ENCODE measurements at regions of chr3 and their contacts with region 1.

Region 1: GRCh38 chr3:171011109-171011872 is 15.2 kb downstream of the SLC2A2 start:
- DNase-seq: no peak
- H3K4me3 ChIP-seq: no peak overlapping the region
- H3K27ac ChIP-seq: no peak overlapping the region
- H3K4me1 ChIP-seq: no peaks in the 10 kb centered on the region
- H3K27me3 ChIP-seq: peaks cover 0 to 2% of the 10 kb centered on the region in 2 experiments
- CTCF ChIP-seq: no peak
- POLR2A ChIP-seq: no peak

Region 2: GRCh38 chr3:170670504-170670903 is 340.8 kb before region 1 on chr3:
- CTCF ChIA-PET with region 1: no interaction called
- POLR2A ChIA-PET with region 1: no interaction called
- dilution Hi-C with region 1: no loop called
- intact Hi-C with region 1: no loop called
- DNase-seq: peak; percentile 35
- H3K4me3 ChIP-seq: no peak overlapping the region
- H3K27ac ChIP-seq: no peak overlapping the region
- H3K4me1 ChIP-seq: no peaks in the 10 kb centered on the region
- H3K27me3 ChIP-seq: no peaks in the 10 kb centered on the region
- CTCF ChIP-seq: no peak
- POLR2A ChIP-seq: no peak

Region 3: DNA sequence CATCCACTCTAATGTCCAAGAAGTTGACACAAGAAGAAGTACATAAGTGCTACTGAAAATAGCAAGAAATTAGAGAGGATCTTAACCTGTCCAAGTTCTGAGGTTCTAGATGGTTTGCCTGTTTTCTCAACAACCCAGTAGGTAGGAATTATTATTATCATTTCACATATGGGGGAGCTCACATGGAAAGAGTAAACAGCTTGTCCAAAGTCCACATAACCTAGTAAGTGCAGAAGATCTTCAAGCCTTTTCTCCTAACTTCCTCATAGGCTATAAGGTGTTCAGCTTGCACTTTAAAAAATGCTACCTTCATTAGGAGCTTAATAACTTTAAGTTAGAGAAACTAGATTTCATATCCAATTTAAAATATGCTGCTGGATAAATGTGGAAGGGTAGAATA is 12.3 kb after region 1 on chr3:
- CTCF ChIA-PET with region 1: interaction called, 14 read pairs
- POLR2A ChIA-PET with region 1: no interaction called
- dilution Hi-C with region 1: no loop called
- intact Hi-C with region 1: no loop called
- DNase-seq: no peak
- H3K4me3 ChIP-seq: no peak overlapping the region
- H3K27ac ChIP-seq: no peak overlapping the region
- H3K4me1 ChIP-seq: peaks cover 5% of the 10 kb centered on the region
- H3K27me3 ChIP-seq: peaks cover 5 to 11% of the 10 kb centered on the region in 2 experiments
- CTCF ChIP-seq: no peak
- POLR2A ChIP-seq: no peak

Region 4: DNA sequence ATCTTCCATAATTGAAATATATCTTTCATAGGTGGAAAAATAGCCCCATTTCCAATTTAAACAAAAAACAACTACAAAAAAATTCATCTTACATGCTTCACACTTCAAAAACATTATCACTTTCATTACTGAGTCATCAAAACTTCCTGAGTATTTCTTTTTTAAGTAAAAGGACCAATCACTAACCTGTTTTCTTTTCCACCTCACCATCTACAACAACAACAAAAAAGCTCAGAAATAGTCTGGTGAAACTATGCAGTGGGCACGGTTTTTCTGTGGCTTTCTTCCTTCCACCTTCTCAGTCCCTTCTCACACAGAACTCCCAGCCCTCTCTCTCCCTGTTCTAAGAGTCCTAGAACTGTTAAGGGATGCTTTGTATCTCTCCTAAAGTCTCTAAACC is 469.2 kb after region 1 on chr3:
- CTCF ChIA-PET with region 1: no interaction called
- POLR2A ChIA-PET with region 1: no interaction called
- dilution Hi-C with region 1: no loop called
- intact Hi-C with region 1: no loop called
- DNase-seq: peak; percentile 54
- H3K4me3 ChIP-seq: no peak overlapping the region
- H3K27ac ChIP-seq: no peak overlapping the region
- H3K4me1 ChIP-seq: peaks cover 4% of the 10 kb centered on the region
- H3K27me3 ChIP-seq: no peaks in the 10 kb centered on the region
- CTCF ChIP-seq: no peak
- POLR2A ChIP-seq: no peak

Region 5: DNA sequence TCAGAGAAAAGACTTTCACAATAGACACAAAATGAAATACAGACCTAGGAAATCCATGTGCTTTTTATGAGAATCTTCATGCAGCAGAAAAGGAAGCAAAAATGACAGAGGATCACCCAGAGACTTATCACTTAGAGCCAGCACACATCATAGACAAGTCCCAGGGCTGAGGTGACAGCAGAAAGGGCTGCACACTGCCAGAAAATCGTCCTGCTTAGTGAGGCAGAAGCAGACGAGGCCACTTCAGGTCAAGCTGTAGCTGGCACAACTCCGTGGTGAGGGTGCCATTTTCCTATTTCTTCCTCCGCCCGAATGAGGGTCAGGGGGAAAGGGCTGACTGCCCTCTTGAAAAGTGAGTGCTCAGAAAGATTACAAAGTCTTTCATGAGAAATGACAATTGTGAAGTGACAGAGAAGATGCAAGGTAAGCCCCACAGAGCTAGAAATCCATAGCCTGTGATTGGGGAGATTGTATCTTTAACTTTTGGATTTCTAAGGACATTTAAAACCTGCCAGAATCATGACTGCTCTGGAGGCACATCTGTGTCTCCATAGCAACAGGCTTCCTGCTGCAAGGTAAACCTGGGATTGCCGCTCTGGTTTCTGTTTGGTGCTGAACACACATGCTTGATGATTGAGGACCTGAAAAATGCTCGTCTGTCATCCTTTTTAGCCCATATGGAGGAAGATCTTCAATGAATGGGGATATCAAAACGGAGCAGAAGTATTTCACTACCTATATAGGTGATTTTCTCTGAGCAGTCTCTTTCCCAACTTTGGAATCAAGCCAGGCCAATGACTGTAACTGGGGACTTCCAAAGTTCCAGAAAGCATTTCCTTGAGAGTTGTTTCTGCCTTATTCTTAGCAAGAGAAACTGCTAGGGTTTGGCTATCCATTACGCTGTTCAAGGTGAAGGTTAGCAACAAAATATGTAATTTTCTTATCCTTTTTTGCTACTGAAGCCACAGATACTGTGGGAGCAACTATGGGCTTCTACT is 545.2 kb after region 1 on chr3:
- CTCF ChIA-PET with region 1: no interaction called
- POLR2A ChIA-PET with region 1: no interaction called
- dilution Hi-C with region 1: no loop called
- intact Hi-C with region 1: no loop called
- DNase-seq: no peak
- H3K4me3 ChIP-seq: no peak overlapping the region
- H3K27ac ChIP-seq: no peak overlapping the region
- H3K4me1 ChIP-seq: no peaks in the 10 kb centered on the region
- H3K27me3 ChIP-seq: no peaks in the 10 kb centered on the region
- CTCF ChIP-seq: no peak
- POLR2A ChIP-seq: no peak

Measured in endothelial cell of umbilical vein (primary cell).